Activated B cell treated with CpG ODN at 0.5 μM for 24 hours (primary cell): ENCODE measurements at regions of chr5 and their contacts with region 1.

Region 1: DNA sequence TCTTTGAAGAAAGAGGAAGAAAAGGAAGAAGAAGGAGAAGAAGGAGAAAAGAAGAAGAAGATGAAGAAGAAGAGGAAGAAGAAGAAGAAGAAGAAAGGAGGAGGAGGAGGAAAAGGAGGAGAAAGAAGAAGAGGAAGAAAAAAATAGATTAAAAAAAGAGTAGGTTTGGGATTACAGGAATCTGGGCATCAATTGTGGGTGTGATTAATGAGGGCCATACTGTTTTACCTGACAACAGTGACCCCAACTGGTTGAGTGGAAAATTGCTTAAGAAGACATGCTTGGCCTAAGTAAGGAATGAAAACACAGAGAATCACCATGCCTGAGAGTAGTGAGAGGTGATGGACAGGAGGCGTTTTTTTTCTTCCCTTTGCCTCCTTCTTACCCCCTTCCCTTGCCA is 114.6 kb downstream of the FAM170A start:
- DNase-seq: no peak
- ATAC-seq: peak; percentile 42
- H3K4me3 Mint-ChIP-seq: no peak overlapping the region
- H3K27ac Mint-ChIP-seq: no peak overlapping the region
- H3K4me1 Mint-ChIP-seq: no peaks in the 10 kb centered on the region
- H3K27me3 Mint-ChIP-seq: no peaks in the 10 kb centered on the region
- CTCF ChIP-seq: no peak

Region 2: GRCh38 chr5:118593003-118593328 is 1151.0 kb before region 1 on chr5:
- CTCF ChIA-PET with region 1: no interaction called
- POLR2A ChIA-PET with region 1: no interaction called
- intact Hi-C with region 1: loop called (anchors 10 kb)
- DNase-seq: no peak
- ATAC-seq: no peak
- H3K4me3 Mint-ChIP-seq: no peak overlapping the region
- H3K27ac Mint-ChIP-seq: no peak overlapping the region
- H3K4me1 Mint-ChIP-seq: no peaks in the 10 kb centered on the region
- H3K27me3 Mint-ChIP-seq: peaks cover 7% of the 10 kb centered on the region
- CTCF ChIP-seq: no peak

Region 3: DNA sequence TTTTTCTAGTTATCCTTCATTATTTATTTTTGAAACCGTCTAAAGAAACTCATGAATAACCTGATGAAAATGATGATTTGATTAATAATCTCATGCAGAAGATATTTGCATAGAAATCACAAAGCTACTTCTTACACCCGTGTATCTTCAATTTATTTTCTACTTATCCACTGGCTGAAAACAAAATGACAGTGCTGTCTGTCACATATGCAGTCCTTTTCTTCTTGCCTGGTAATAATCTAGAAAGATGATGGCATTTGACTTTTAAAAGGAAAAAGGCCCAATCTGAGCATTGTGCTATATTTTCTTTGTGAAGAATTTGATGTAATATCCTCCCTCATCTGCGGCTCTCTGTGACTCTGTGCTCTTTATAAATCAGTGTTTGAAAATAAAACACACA is 973.5 kb after region 1 on chr5:
- CTCF ChIA-PET with region 1: no interaction called
- POLR2A ChIA-PET with region 1: no interaction called
- intact Hi-C with region 1: no loop called
- DNase-seq: no peak
- ATAC-seq: no peak
- H3K4me3 Mint-ChIP-seq: no peak overlapping the region
- H3K27ac Mint-ChIP-seq: no peak overlapping the region
- H3K4me1 Mint-ChIP-seq: no peaks in the 10 kb centered on the region
- H3K27me3 Mint-ChIP-seq: no peaks in the 10 kb centered on the region
- CTCF ChIP-seq: no peak